ENCODE measurements at regions of chr15 and their contacts with region 1.

Region 1: GRCh38 chr15:84810073-84810840 is 6.9 kb upstream of the ALPK3 start:
- DNase-seq: no peak
- H3K4me3 ChIP-seq: no peak overlapping the region
- H3K27ac ChIP-seq: no peak overlapping the region
- H3K4me1 ChIP-seq: peaks cover 0 to 2% (median 0%) of the 10 kb centered on the region in 4 donors
- H3K27me3 ChIP-seq: no peaks in the 10 kb centered on the region
- CTCF ChIP-seq: no peak

Region 2: DNA sequence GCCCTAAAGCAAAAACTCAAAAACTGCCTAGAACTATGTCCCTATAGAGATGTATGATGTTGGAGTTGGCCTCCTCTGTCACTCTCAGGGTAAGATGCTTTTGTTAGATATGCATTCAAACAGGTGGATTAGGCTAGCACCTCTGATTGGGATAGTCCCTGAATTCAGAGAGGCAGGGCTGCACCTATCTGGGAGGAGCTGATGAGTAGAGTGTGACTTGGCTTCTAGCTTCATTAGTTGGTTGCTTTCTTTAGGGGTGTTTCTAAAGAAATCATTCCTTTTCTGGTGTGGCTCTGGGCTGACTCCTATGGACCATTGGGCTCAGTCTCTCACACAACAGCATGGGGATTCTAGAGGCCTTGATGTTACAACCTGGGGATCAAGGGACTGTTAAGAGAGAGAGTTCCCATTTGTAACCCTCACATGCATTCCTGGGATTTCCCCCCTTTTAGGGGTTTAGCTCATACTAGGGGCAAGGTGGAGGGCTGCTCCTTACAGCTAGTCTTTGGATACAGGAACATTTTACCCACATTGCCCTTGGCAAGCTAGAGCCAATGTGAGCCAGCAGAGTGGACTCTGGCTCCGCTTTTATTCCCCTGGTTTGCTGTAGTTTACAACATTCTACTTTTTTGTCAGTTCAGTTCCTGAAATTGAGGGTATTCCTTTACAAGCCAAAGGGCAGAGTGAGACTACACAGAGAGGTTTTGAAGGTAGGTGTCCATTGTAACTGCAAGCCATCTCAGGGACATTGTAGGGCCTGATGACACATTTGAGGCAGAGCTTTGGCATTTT is 54.3 kb before region 1 on chr15:
- intact Hi-C with region 1: loop called (anchors 5 kb)
- DNase-seq: no peak
- H3K4me3 ChIP-seq: no peak overlapping the region
- H3K27ac ChIP-seq: peak overlapping the region in 1 of 2 donors; percentile 19
- H3K4me1 ChIP-seq: peaks cover 0 to 95% (median 53%) of the 10 kb centered on the region in 4 donors
- H3K27me3 ChIP-seq: no peaks in the 10 kb centered on the region
- CTCF ChIP-seq: no peak

Region 3: DNA sequence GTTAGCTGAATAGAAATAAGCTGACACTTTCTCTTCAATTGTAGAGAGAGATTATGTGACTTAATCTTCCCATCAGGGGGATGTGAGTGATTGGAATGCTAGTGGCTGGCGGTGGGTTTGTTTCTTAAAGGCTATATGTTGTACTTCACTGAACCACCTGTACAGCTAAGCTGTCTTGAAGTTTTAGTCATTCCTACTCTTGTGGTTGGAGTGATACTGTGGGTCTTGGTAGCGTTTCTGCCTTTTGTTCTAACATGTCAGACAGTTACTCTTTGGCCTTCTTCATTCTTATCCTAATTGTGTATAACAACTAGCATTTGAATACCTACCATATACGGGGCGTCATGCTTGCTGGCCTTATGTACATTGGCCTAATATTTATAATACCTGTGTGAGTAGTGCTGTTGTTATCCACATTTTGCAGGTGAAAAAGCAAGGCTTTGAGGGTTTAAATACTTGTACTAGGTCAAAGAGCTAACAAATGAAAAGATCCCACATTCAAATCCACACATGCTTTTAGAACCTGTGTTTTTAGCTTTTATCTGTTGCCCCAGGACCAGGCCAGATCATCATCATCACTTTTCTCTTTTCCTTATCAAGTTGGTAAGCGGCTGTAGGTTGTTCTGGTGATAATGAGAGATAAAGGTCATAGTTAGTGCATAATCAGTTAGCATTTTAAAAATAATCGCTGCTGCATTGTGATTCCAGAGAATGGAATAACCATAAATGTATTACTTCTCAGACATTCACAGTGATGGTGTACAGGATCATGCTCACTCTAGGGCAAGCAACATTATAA is 620.3 kb after region 1 on chr15:
- intact Hi-C with region 1: no loop called
- DNase-seq: no peak
- H3K4me3 ChIP-seq: no peak overlapping the region
- H3K27ac ChIP-seq: no peak overlapping the region
- H3K4me1 ChIP-seq: peaks cover 0 to 23% (median 0%) of the 10 kb centered on the region in 4 donors
- H3K27me3 ChIP-seq: no peaks in the 10 kb centered on the region
- CTCF ChIP-seq: no peak

Region 4: DNA sequence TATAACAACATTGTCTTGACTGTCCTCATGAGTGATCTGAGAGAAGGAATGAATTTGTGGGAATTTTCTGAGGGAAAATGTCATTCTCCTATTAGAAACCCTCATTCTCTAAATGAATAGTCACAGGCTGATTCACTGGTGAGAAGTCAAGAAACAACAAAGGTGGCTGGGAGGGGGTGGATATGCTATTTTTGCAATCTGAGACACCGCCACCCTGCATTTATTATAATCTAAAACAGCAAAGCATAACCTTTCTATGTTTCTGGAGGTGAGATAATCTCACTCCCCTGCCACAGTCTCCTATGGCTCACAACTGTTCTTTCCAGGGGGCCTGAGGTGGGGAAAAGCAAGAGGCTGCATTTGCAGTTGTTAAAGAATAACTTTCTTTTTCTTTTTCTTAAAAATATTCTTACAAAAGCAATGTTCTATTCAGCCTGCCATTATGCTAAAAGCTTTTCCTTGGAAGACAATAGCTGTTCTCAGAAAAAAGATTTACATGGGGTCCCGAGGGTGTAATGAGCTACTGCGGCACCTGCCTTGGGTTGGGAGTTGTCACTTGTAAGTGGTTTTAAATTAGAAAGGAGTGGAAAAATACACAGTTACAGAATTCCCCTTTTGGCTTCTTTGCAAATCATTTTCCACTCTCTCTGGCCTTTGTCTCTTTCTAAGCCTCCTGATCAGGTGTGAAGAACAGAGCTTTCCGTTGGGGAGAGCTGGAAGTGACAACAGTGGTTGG is 1490.3 kb after region 1 on chr15:
- intact Hi-C with region 1: no loop called
- DNase-seq: no peak
- H3K4me3 ChIP-seq: no peak overlapping the region
- H3K27ac ChIP-seq: no peak overlapping the region
- H3K4me1 ChIP-seq: no peaks in the 10 kb centered on the region
- H3K27me3 ChIP-seq: no peaks in the 10 kb centered on the region
- CTCF ChIP-seq: no peak

Measured in tibial artery (tissue), 4 donors.